CD4-positive, alpha-beta memory T cell (primary cell): ENCODE measurements at regions of chr5 and their contacts with region 1.

Region 1: DNA sequence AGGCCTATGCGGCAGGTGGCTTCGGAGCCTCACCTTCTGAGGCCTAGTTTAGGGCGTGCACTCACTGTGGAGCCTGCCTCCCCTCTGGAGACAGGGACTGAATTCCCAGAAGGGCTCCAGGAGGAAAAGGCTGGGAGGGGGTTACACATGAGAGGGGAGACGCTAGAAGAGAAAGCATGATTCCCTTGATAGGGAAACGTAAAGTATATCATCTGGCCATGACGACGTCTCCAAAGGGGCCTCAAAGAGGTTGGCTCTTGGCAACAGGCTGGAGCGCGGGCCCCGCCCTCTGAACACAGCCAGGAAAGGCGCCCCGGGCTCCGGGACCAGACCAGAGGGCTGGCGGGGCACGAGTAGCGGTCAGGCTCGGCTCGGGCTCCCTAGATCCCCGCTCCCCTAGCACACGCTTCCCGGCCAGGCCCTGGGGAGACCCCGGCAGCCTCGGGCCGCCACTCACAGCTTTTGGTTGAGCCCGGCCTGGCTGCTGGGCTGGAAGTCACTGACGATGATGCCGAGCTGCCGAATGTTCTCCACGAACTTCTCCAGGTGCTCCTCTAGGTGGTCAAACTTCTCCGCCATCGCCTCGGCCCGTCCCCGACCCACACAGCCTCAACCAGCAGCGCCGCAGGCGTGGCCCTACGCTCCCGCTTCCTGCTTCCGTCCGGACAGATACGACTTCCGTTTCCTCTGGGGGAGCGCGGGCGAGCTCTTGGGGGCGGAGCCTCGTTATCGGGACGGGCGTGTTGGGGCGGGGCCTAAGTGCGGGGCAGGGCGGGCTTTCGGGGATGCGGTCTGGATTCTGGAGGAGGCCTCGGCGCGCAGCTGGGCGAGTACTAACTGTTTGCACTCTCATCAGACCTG is at the start of gene MED10:
- DNase-seq: peak; percentile 91 to 95 (median 92)
- H3K4me3 ChIP-seq: peak within 1 kb of the TSS; percentile 89 to 90
- H3K4me3 Mint-ChIP-seq: peak within 1 kb of the TSS; percentile 96 to 100 (median 99)
- H3K27ac ChIP-seq: peak within 1 kb of the TSS; percentile 86
- H3K27ac Mint-ChIP-seq: peak within 1 kb of the TSS; percentile 95 to 100 (median 98)
- H3K4me1 ChIP-seq: peaks cover 34% of the 10 kb centered on the region
- H3K4me1 Mint-ChIP-seq: peaks cover 35 to 62% (median 49%) of the 10 kb centered on the region in 4 donors
- H3K27me3 ChIP-seq: no peaks in the 10 kb centered on the region
- H3K27me3 Mint-ChIP-seq: no peaks in the 10 kb centered on the region
- total RNA-seq, gene MED10: 61.2 to 64.7 TPM

Region 2: GRCh38 chr5:6359555-6360322 is 18.4 kb before region 1 on chr5:
- CTCF ChIA-PET with region 1: no interaction called
- POLR2A ChIA-PET with region 1: interaction called, 16 read pairs
- intact Hi-C with region 1: no loop called
- DNase-seq: peak in 4 of 5 donors; percentile 33 to 56 (median 44)
- H3K4me3 ChIP-seq: no peak overlapping the region
- H3K4me3 Mint-ChIP-seq: peak overlapping the region; percentile 73 to 87 (median 79)
- H3K27ac ChIP-seq: no peak overlapping the region
- H3K27ac Mint-ChIP-seq: peak overlapping the region; percentile 87 to 94 (median 90)
- H3K4me1 ChIP-seq: peaks cover 23% of the 10 kb centered on the region
- H3K4me1 Mint-ChIP-seq: peaks cover 7 to 32% (median 23%) of the 10 kb centered on the region in 4 donors
- H3K27me3 ChIP-seq: no peaks in the 10 kb centered on the region
- H3K27me3 Mint-ChIP-seq: no peaks in the 10 kb centered on the region

Region 3: DNA sequence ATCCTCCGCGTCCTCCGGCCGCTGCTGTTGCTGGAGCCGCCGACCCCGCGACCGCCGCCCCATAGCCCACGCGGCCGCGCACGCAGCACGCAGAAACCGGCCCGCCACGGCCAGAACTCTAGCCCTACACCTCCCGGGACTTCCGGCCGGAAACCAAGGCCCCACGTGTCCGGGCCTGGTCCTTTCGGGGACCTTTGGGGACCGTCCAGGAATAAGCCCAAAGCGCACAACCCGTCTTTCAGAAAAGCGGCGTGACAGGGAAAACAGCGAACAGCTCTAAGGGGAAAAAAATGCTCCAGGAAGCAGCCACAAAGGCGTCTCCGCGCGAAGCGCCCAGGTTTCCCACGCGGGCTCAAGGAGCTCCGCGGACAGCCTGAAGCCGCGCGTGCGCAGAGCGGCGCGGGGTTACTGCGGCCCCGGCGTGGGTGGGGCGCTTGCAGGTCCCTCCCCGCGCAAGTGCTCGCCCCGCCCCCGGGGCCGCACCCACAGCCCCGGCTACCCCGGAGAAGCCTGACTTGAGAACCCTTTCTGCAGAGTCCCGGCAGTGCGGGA is 254.9 kb after region 1 on chr5 and contains the starts of genes NSUN2 and SRD5A1:
- CTCF ChIA-PET with region 1: interaction called, 3 read pairs
- POLR2A ChIA-PET with region 1: interaction called, 9 read pairs
- intact Hi-C with region 1: loop called (anchors 1 kb)
- DNase-seq: peak; percentile 92 to 98 (median 95)
- H3K4me3 ChIP-seq: peak within 1 kb of the TSS; percentile 66 to 94
- H3K4me3 Mint-ChIP-seq: peak within 1 kb of the TSS; percentile 84 to 99 (median 93)
- H3K27ac ChIP-seq: peak within 1 kb of the TSS; percentile 87
- H3K27ac Mint-ChIP-seq: peak within 1 kb of the TSS; percentile 92 to 99 (median 99)
- H3K4me1 ChIP-seq: peaks cover 36% of the 10 kb centered on the region
- H3K4me1 Mint-ChIP-seq: peaks cover 30 to 60% (median 39%) of the 10 kb centered on the region in 4 donors
- H3K27me3 ChIP-seq: no peaks in the 10 kb centered on the region
- H3K27me3 Mint-ChIP-seq: no peaks in the 10 kb centered on the region
- total RNA-seq, gene NSUN2: 78.0 to 81.6 TPM
- total RNA-seq, gene SRD5A1: 7.8 to 9.2 TPM

Region 4: DNA sequence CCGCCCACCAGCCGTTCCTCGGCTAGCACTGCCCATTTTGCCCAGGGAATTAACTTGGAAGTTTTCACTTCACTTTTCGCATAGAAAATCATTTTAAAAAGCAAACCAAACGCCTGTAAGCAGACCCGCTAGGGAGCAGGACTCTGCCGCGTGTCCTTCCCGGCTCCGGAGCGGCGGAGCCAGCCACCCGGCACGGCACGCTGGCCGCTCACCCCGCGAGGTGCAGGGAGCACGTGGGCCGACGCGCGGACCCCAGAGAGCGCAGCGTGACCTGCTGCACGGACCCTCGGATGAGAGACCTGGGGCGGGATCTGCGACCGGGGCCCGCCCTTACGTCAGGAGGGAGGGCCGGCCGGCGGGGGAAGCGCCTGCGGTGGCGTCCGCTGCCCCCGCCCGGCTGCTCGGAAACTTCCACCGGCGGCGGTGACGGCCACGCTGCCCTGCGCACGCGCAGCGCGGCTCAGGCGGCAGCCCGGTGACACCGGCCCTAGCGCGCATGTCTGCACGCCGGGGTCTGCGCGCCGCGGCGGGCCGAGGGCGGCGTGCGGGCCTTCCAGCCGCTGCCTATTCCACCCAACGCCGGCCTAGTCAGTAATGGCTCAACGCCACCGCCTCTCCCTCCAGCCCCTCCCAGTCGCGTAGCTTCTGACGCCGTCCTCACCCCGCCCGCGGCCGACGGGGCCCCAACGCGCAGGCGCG is 334.6 kb after region 1 on chr5:
- CTCF ChIA-PET with region 1: no interaction called
- POLR2A ChIA-PET with region 1: no interaction called
- intact Hi-C with region 1: loop called (anchors 1 kb)
- DNase-seq: peak; percentile 96 to 99 (median 99)
- H3K4me3 ChIP-seq: peak overlapping the region; percentile 70 to 81
- H3K4me3 Mint-ChIP-seq: peak overlapping the region; percentile 88 to 91 (median 90)
- H3K27ac ChIP-seq: peak overlapping the region; percentile 86
- H3K27ac Mint-ChIP-seq: peak overlapping the region; percentile 92 to 95 (median 94)
- H3K4me1 ChIP-seq: peaks cover 31% of the 10 kb centered on the region
- H3K4me1 Mint-ChIP-seq: peaks cover 26 to 39% (median 33%) of the 10 kb centered on the region in 4 donors
- H3K27me3 ChIP-seq: no peaks in the 10 kb centered on the region
- H3K27me3 Mint-ChIP-seq: no peaks in the 10 kb centered on the region